ENCODE measurements at regions of chr3 and their contacts with region 1.

Region 1: DNA sequence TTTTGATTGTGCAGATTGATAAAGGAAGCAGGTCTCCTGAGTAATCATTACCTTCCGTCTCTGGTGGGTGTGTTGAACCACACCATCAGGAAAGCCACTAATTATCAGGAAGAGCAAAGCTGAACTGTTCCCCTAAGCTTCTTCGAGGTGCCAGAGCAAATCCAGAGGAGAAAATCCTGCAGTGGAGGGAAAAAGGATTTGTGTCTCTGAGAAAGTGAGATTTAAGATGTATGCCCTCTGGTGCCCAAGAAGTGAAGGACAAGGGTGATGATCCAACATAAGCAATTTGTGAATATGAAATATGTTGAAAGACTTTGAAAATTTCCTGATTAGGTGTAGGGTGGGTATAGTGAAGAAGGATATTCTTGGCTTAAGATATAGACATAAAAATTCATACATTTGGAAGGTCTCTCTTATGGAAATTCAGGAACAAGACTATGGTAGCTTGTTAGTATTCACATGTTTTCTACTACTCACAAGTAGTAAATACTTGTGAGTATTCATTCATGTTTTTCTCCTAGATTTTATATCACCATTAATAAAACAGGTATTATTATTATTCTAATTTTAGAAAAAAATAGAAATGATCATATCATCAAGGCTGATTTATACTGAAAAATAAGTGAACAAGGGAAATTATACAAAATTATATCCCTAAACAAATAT is 34.8 kb downstream of the COMMD2 start:
- DNase-seq: peak; percentile 49
- ATAC-seq: no peak
- H3K4me3 Mint-ChIP-seq: no peak overlapping the region
- H3K27ac Mint-ChIP-seq: no peak overlapping the region
- H3K4me1 Mint-ChIP-seq: no peaks in the 10 kb centered on the region
- H3K27me3 Mint-ChIP-seq: no peaks in the 10 kb centered on the region

Region 2: GRCh38 chr3:149512209-149512782 is 205.2 kb before region 1 on chr3:
- CTCF ChIA-PET with region 1: no interaction called
- POLR2A ChIA-PET with region 1: no interaction called
- intact Hi-C with region 1: loop called (anchors 1 kb)
- DNase-seq: peak; percentile 56
- ATAC-seq: peak; percentile 57
- H3K4me3 Mint-ChIP-seq: no peak overlapping the region
- H3K27ac Mint-ChIP-seq: no peak overlapping the region
- H3K4me1 Mint-ChIP-seq: peaks cover 17% of the 10 kb centered on the region
- H3K27me3 Mint-ChIP-seq: peaks cover 17% of the 10 kb centered on the region

Region 3: GRCh38 chr3:149527531-149528339 is 189.8 kb before region 1 on chr3:
- CTCF ChIA-PET with region 1: interaction called, 4 read pairs
- POLR2A ChIA-PET with region 1: no interaction called
- intact Hi-C with region 1: loop called in 1 of 2 experiments (anchors 1 kb)
- DNase-seq: no peak
- ATAC-seq: no peak
- H3K4me3 Mint-ChIP-seq: no peak overlapping the region
- H3K27ac Mint-ChIP-seq: no peak overlapping the region
- H3K4me1 Mint-ChIP-seq: peaks cover 4% of the 10 kb centered on the region
- H3K27me3 Mint-ChIP-seq: peaks cover 3% of the 10 kb centered on the region

Region 4: GRCh38 chr3:149575961-149576564 is 141.5 kb before region 1 on chr3:
- CTCF ChIA-PET with region 1: interaction called, 5 read pairs
- POLR2A ChIA-PET with region 1: no interaction called
- intact Hi-C with region 1: loop called in 1 of 2 experiments (anchors 5 kb)
- DNase-seq: peak; percentile 19
- ATAC-seq: peak; percentile 54
- H3K4me3 Mint-ChIP-seq: no peak overlapping the region
- H3K27ac Mint-ChIP-seq: no peak overlapping the region
- H3K4me1 Mint-ChIP-seq: peaks cover 39% of the 10 kb centered on the region
- H3K27me3 Mint-ChIP-seq: peaks cover 3% of the 10 kb centered on the region

Region 5: DNA sequence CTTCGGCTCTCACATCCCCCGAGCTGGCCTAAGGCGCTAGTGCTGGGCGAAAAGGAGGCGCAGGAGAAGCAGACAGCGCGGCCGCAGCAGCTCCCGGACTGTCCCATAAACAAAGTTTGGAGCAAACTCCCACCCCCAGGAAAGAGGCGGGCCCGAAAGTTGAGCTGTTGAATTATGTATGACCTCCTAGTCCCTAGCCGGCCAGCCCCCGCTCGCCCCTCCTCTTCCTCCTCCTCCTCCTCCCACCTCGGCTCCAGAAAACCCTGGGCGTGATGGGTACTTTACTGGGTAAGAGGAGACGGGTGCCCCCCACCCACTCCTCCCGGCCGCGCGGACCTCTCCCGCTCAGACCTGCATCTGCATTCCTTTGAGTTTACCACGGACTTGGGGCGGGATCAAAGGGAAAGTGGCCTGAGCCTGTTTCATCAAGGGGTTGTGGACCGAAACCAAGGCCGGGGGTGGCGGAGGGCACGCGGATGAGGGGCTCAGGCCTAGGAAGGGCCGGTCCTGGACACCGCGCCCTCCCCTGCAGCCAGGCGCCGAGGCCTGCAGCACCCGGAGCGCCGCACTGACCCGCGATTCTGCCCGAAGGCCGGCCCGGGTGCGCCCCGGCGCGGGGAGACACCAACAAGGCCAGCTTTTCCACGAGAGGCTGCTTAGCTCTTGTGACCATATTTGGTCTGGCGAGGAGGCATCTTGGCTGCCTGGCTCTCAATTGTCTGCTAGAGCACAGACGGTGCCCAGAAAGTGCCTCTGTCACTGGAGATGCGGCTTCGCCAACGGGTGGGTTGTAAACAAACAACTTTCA is 59.4 kb before region 1 on chr3 and contains the start of gene WWTR1:
- CTCF ChIA-PET with region 1: no interaction called
- POLR2A ChIA-PET with region 1: no interaction called
- intact Hi-C with region 1: loop called in 1 of 2 experiments (anchors 5 kb)
- DNase-seq: peak; percentile 61
- ATAC-seq: peak; percentile 71
- H3K4me3 Mint-ChIP-seq: peak within 1 kb of the TSS; percentile 69
- H3K27ac Mint-ChIP-seq: peak within 1 kb of the TSS; percentile 57
- H3K4me1 Mint-ChIP-seq: peaks cover 12% of the 10 kb centered on the region
- H3K27me3 Mint-ChIP-seq: peaks cover 50% of the 10 kb centered on the region
- total RNA-seq, gene WWTR1: 0.46 to 0.54 TPM

Region 6: DNA sequence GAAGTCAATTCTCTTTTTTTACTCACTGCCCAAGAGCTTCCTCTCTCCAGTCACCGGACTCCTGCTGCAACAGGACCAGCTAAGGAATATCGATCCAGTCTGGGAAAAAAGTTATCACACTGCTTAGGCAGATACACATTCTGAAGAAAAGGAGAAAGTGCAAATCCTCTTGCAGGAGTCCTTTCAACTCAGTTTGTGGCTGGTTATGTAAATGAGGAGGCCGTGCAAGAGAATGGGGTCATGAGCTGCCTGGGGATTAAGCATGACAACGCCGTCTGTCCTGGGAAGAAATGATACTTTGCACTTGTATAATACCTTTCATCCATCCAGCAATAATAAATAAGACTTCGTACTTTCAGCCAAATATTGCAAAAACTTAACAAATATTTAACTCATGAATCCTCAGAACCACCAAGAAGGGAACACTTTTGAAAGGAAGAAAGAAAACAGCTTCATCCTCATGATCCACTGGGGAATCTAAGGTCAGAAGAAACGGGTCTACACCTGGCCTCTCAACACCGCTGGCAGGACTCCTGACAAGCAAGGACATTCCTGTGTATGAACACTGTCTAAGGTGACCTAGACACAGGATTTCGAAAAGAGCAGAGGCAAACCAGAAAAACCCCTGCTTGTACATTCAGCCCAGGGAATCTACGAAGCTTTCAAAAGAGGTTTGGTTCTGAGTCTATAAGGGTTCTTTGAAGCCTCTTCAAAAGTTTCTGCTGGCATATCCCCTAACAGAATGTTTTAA is 46.6 kb before region 1 on chr3:
- CTCF ChIA-PET with region 1: no interaction called
- POLR2A ChIA-PET with region 1: no interaction called
- intact Hi-C with region 1: no loop called
- DNase-seq: no peak
- ATAC-seq: no peak
- H3K4me3 Mint-ChIP-seq: no peak overlapping the region
- H3K27ac Mint-ChIP-seq: no peak overlapping the region
- H3K4me1 Mint-ChIP-seq: peaks cover 4% of the 10 kb centered on the region
- H3K27me3 Mint-ChIP-seq: peaks cover 8% of the 10 kb centered on the region

Region 7: DNA sequence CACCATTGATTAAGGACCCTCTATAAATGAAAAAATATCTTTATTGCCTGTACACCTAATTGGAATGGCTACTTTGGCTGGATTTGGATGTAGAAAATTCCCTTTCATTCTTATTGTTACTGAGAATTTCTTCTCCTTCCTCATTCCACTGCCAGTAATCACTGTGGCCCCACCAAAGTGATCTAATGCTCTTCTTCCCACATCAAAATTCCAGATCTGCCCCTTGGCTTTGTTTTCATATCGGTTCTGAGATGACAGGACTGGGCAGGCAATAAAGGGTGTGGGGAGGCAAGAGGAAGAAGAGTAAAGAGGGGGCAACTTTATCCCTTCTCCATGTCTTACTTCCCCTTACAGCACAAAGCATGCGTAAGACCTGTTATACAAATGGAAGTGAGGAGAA is 72.7 kb after region 1 on chr3:
- CTCF ChIA-PET with region 1: no interaction called
- POLR2A ChIA-PET with region 1: no interaction called
- intact Hi-C with region 1: no loop called
- DNase-seq: no peak
- ATAC-seq: no peak
- H3K4me3 Mint-ChIP-seq: no peak overlapping the region
- H3K27ac Mint-ChIP-seq: no peak overlapping the region
- H3K4me1 Mint-ChIP-seq: no peaks in the 10 kb centered on the region
- H3K27me3 Mint-ChIP-seq: peaks cover 20% of the 10 kb centered on the region

Region 8: GRCh38 chr3:149812606-149813366 is 95.3 kb after region 1 on chr3 and contains the start of gene RNF13:
- CTCF ChIA-PET with region 1: no interaction called
- POLR2A ChIA-PET with region 1: no interaction called
- intact Hi-C with region 1: no loop called
- DNase-seq: peak; percentile 96
- ATAC-seq: peak; percentile 95
- H3K4me3 Mint-ChIP-seq: peak within 1 kb of the TSS; percentile 95
- H3K27ac Mint-ChIP-seq: peak within 1 kb of the TSS; percentile 100
- H3K4me1 Mint-ChIP-seq: peaks cover 46% of the 10 kb centered on the region
- H3K27me3 Mint-ChIP-seq: peaks cover 3% of the 10 kb centered on the region
- total RNA-seq, gene RNF13: 28.8 to 41.2 TPM

Measured in activated CD4-positive, alpha-beta T cell treated with anti-CD3 and anti-CD28 coated beads for 36 hours (primary cell).